ENCODE measurements at regions of chr6 and their contacts with region 1.

Region 1: GRCh38 chr6:42879372-42880239 is at the start of gene RPL7L1:
- DNase-seq: peak; percentile 68 to 93 (median 79)
- ATAC-seq: peak; percentile 92
- H3K4me3 ChIP-seq: peak within 1 kb of the TSS; percentile 69
- H3K4me3 Mint-ChIP-seq: peak within 1 kb of the TSS; percentile 93
- H3K27ac ChIP-seq: peak within 1 kb of the TSS; percentile 94 to 95
- H3K27ac Mint-ChIP-seq: peak within 1 kb of the TSS; percentile 97
- H3K4me1 ChIP-seq: peaks cover 41% of the 10 kb centered on the region
- H3K4me1 Mint-ChIP-seq: peaks cover 23% of the 10 kb centered on the region
- H3K27me3 ChIP-seq: no peaks in the 10 kb centered on the region
- H3K27me3 Mint-ChIP-seq: no peaks in the 10 kb centered on the region
- CTCF ChIP-seq: no peak
- total RNA-seq, gene RPL7L1: 76.1 TPM

Region 2: DNA sequence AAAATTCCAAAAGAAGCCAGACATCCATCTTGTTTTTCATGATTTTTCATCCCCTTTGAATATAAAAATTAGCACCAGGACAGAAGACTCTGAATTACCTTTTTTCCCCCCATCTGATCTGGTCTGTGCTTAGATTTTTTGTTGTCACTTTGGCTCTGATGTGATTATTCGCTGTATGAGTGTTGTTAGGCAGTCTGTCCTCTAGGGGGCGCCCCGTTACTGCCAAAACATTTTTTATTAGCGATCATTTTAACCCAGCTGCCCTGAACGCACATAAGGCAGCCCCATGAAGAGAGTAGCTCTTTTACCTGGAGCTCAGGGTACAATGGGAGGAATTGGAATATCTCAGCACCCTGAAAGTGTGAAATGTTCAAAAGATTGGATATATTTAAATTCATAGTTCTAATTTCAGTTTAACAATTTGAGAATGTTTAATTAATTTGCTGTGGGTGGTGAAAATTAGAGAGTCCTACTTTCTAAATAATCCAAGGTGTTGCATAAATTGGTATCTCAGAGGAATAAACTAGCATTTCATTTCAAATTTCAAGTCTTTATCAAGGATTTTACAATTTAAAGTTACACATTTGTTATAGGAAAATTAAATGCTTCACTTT is 218.0 kb before region 1 on chr6:
- CTCF ChIA-PET with region 1: interaction called, 15 read pairs
- POLR2A ChIA-PET with region 1: interaction called, 20 read pairs
- intact Hi-C with region 1: loop called (anchors 1 kb)
- DNase-seq: peak; percentile 75 to 91 (median 85)
- ATAC-seq: peak; percentile 100
- H3K4me3 ChIP-seq: no peak overlapping the region
- H3K4me3 Mint-ChIP-seq: no peak overlapping the region
- H3K27ac ChIP-seq: no peak overlapping the region
- H3K27ac Mint-ChIP-seq: no peak overlapping the region
- H3K4me1 ChIP-seq: no peaks in the 10 kb centered on the region
- H3K4me1 Mint-ChIP-seq: no peaks in the 10 kb centered on the region
- H3K27me3 ChIP-seq: no peaks in the 10 kb centered on the region
- H3K27me3 Mint-ChIP-seq: no peaks in the 10 kb centered on the region
- CTCF ChIP-seq: peak; percentile 90

Region 3: DNA sequence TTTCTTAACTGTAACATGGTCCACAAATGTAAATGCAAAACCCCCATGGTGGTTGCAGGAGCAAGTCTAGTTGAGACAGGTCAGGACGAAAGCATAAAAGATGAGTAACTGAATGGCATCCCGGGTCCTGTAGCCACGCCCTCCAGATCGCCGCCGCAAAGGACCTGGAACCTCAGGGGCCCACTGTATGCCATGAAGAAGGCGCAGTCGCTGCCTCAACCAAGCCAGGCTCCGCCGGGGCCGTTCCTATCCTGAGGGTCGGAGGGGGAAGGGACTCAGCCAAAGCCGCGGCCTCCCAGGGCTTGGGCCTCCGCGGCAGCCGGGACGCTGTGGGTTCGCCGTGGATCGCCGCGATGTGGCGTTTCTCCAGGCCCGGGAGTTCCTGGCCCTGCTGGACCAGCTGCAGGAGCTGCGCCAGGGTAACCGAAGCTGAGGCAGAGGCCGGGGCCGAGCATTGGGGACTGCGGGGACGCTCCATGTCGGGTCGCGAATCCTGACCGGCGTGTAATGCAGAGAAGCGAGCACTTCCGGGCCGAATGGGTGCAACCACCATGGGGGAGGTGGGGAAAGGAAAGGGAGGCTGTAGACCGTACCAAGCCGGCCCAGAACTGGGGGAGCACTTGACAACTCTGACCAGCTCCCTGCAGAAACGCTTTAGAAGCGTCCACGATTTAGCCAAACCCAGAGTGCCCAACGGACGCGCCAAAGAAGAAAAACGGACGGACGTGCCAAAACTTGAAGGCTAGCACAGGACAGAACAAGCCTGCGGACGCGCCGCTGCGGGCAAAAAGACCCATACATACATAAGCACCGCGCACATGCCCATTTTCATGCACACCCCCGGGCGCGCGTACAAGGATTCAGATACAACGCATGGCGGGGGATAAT is 10.9 kb after region 1 on chr6:
- CTCF ChIA-PET with region 1: interaction called, 4 read pairs
- POLR2A ChIA-PET with region 1: interaction called, 77 read pairs
- intact Hi-C with region 1: loop called (anchors 1 kb)
- DNase-seq: peak; percentile 77 to 93 (median 87)
- ATAC-seq: peak; percentile 93
- H3K4me3 ChIP-seq: peak overlapping the region; percentile 94
- H3K4me3 Mint-ChIP-seq: peak overlapping the region; percentile 91
- H3K27ac ChIP-seq: peak overlapping the region; percentile 86 to 89
- H3K27ac Mint-ChIP-seq: peak overlapping the region; percentile 94
- H3K4me1 ChIP-seq: peaks cover 17% of the 10 kb centered on the region
- H3K4me1 Mint-ChIP-seq: peaks cover 16% of the 10 kb centered on the region
- H3K27me3 ChIP-seq: no peaks in the 10 kb centered on the region
- H3K27me3 Mint-ChIP-seq: no peaks in the 10 kb centered on the region
- CTCF ChIP-seq: no peak